ENCODE measurements at regions of chr3 and their contacts with region 1.

Region 1: GRCh38 chr3:47420511-47421484 is 40.0 kb downstream of the PTPN23 start:
- DNase-seq: peak; percentile 63 to 93
- H3K4me3 ChIP-seq: no peak overlapping the region
- H3K27ac ChIP-seq: peak overlapping the region; percentile 65 to 67
- H3K4me1 ChIP-seq: peaks cover 3 to 8% of the 10 kb centered on the region in 2 donors
- H3K27me3 ChIP-seq: no peaks in the 10 kb centered on the region
- CTCF ChIP-seq: peak; percentile 92 to 96 (median 94)

Region 2: GRCh38 chr3:47324278-47324865 is 96.4 kb before region 1 on chr3:
- intact Hi-C with region 1: no loop called
- DNase-seq: no peak
- H3K4me3 ChIP-seq: no peak overlapping the region
- H3K27ac ChIP-seq: no peak overlapping the region
- H3K4me1 ChIP-seq: no peaks in the 10 kb centered on the region
- H3K27me3 ChIP-seq: no peaks in the 10 kb centered on the region
- CTCF ChIP-seq: peak; percentile 47 to 77 (median 61)

Region 3: DNA sequence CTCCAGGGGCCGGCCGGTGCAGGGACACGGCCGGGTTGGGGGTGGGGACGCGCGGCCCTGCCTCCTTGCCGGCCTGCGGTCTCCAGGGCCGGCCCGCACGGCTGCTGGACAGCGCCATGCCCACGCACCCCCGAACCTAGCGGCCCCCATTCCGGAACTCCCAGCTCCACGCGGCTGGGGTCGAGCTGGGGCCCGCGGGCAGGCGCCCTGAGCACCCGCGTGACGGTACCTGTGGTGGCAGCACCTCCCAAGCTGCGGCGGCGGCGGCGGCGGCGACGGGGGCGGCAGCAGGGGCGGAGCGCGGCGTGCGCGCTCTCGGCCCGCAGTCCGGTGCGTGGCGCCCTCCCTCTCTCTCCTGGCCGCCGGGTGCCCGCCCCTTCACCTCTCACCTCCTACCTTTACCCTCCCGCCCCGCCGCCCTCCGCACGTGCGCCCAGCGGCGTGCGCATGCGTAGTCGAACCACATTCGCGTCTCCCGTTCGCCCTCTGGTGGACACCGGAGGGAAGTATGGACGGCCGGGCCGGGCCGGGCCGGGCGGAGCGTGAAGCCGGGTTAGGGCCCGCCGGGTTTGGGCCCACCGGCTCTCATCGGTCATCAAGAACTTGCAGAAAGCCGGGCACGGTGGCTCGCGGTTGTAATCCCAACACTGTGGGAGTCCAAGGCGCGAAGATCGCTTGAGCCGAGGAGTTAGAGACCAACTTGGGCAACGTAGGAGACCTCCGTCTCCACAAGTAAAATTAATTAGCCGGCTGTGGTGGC is 55.0 kb after region 1 on chr3 and contains the start of gene SCAP:
- intact Hi-C with region 1: loop called (anchors 1 kb)
- DNase-seq: peak; percentile 67 to 96
- H3K4me3 ChIP-seq: peak within 1 kb of the TSS; percentile 84 to 88
- H3K27ac ChIP-seq: peak within 1 kb of the TSS; percentile 81 to 90
- H3K4me1 ChIP-seq: peaks cover 8 to 15% of the 10 kb centered on the region in 2 donors
- H3K27me3 ChIP-seq: no peaks in the 10 kb centered on the region
- CTCF ChIP-seq: peak; percentile 93 to 99 (median 97)
- total RNA-seq, gene SCAP: 155 TPM

Region 4: GRCh38 chr3:47491186-47491585 is 70.4 kb after region 1 on chr3:
- intact Hi-C with region 1: no loop called
- DNase-seq: no peak
- H3K4me3 ChIP-seq: no peak overlapping the region
- H3K27ac ChIP-seq: no peak overlapping the region
- H3K4me1 ChIP-seq: no peaks in the 10 kb centered on the region
- H3K27me3 ChIP-seq: no peaks in the 10 kb centered on the region
- CTCF ChIP-seq: no peak

Region 5: GRCh38 chr3:47781685-47782445 is 361.1 kb after region 1 on chr3 and contains the start of gene SMARCC1:
- intact Hi-C with region 1: loop called (anchors 5 kb)
- DNase-seq: peak; percentile 89 to 99
- H3K4me3 ChIP-seq: peak within 1 kb of the TSS; percentile 75 to 97
- H3K27ac ChIP-seq: peak within 1 kb of the TSS; percentile 93 to 97
- H3K4me1 ChIP-seq: peaks cover 0 to 18% of the 10 kb centered on the region in 2 donors
- H3K27me3 ChIP-seq: no peaks in the 10 kb centered on the region
- CTCF ChIP-seq: no peak
- total RNA-seq, gene SMARCC1: 24.8 TPM

Region 6: GRCh38 chr3:48268381-48269183 is 847.8 kb after region 1 on chr3:
- intact Hi-C with region 1: no loop called
- DNase-seq: no peak
- H3K4me3 ChIP-seq: no peak overlapping the region
- H3K27ac ChIP-seq: no peak overlapping the region
- H3K4me1 ChIP-seq: no peaks in the 10 kb centered on the region
- H3K27me3 ChIP-seq: no peaks in the 10 kb centered on the region
- CTCF ChIP-seq: no peak